WTC11 (cell line): ENCODE measurements at regions of chr12 and their contacts with region 1.

Region 1: GRCh38 chr12:108193917-108194316 is 64.8 kb downstream of the WSCD2 start:
- DNase-seq: peak; percentile 28
- ATAC-seq: no peak
- H3K4me3 Mint-ChIP-seq: no peak overlapping the region
- H3K27ac Mint-ChIP-seq: no peak overlapping the region
- H3K4me1 Mint-ChIP-seq: peaks cover 8% of the 10 kb centered on the region
- H3K27me3 Mint-ChIP-seq: no peaks in the 10 kb centered on the region
- CTCF ChIP-seq: peak; percentile 63

Region 2: GRCh38 chr12:107801150-107801549 is 392.8 kb before region 1 on chr12:
- CTCF ChIA-PET with region 1: no interaction called
- POLR2A ChIA-PET with region 1: no interaction called
- DNase-seq: no peak
- ATAC-seq: no peak
- H3K4me3 Mint-ChIP-seq: no peak overlapping the region
- H3K27ac Mint-ChIP-seq: no peak overlapping the region
- H3K4me1 Mint-ChIP-seq: peaks cover 15% of the 10 kb centered on the region
- H3K27me3 Mint-ChIP-seq: peaks cover 9% of the 10 kb centered on the region
- CTCF ChIP-seq: no peak

Region 3: GRCh38 chr12:108063192-108063591 is 130.7 kb before region 1 on chr12:
- CTCF ChIA-PET with region 1: interaction called, 15 read pairs
- POLR2A ChIA-PET with region 1: no interaction called
- DNase-seq: no peak
- ATAC-seq: peak; percentile 53
- H3K4me3 Mint-ChIP-seq: no peak overlapping the region
- H3K27ac Mint-ChIP-seq: no peak overlapping the region
- H3K4me1 Mint-ChIP-seq: no peaks in the 10 kb centered on the region
- H3K27me3 Mint-ChIP-seq: no peaks in the 10 kb centered on the region
- CTCF ChIP-seq: peak; percentile 84

Region 4: GRCh38 chr12:108129017-108129812 is 64.7 kb before region 1 on chr12 and contains the start of gene WSCD2:
- CTCF ChIA-PET with region 1: interaction called, 17 read pairs
- POLR2A ChIA-PET with region 1: no interaction called
- DNase-seq: peak; percentile 90
- ATAC-seq: peak; percentile 90
- H3K4me3 Mint-ChIP-seq: peak within 1 kb of the TSS; percentile 69
- H3K27ac Mint-ChIP-seq: no peak within 1 kb of the TSS
- H3K4me1 Mint-ChIP-seq: peaks cover 25% of the 10 kb centered on the region
- H3K27me3 Mint-ChIP-seq: peaks cover 28% of the 10 kb centered on the region
- CTCF ChIP-seq: no peak
- total RNA-seq, gene WSCD2: 1.1 to 1.6 TPM (median 1.6 TPM) in 3 replicates

Region 5: GRCh38 chr12:108173160-108173559 is 20.8 kb before region 1 on chr12:
- CTCF ChIA-PET with region 1: interaction called, 10 read pairs
- POLR2A ChIA-PET with region 1: no interaction called
- DNase-seq: peak; percentile 21
- ATAC-seq: peak; percentile 75
- H3K4me3 Mint-ChIP-seq: no peak overlapping the region
- H3K27ac Mint-ChIP-seq: peak overlapping the region; percentile 82; the same call in 1 of the 2 replicates
- H3K4me1 Mint-ChIP-seq: peaks cover 47% of the 10 kb centered on the region
- H3K27me3 Mint-ChIP-seq: no peaks in the 10 kb centered on the region; the same call in none of the 2 replicates
- CTCF ChIP-seq: no peak

Region 6: GRCh38 chr12:108442067-108442466 is 248.2 kb after region 1 on chr12:
- CTCF ChIA-PET with region 1: no interaction called
- POLR2A ChIA-PET with region 1: no interaction called
- DNase-seq: peak; percentile 38
- ATAC-seq: peak; percentile 93
- H3K4me3 Mint-ChIP-seq: peak overlapping the region; percentile 36
- H3K27ac Mint-ChIP-seq: peak overlapping the region; percentile 99
- H3K4me1 Mint-ChIP-seq: peaks cover 66% of the 10 kb centered on the region
- H3K27me3 Mint-ChIP-seq: no peaks in the 10 kb centered on the region
- CTCF ChIP-seq: no peak

Region 7: GRCh38 chr12:108457006-108457733 is 263.3 kb after region 1 on chr12:
- CTCF ChIA-PET with region 1: interaction called, 11 read pairs
- POLR2A ChIA-PET with region 1: no interaction called
- DNase-seq: no peak
- ATAC-seq: peak; percentile 95
- H3K4me3 Mint-ChIP-seq: no peak overlapping the region
- H3K27ac Mint-ChIP-seq: peak overlapping the region; percentile 3
- H3K4me1 Mint-ChIP-seq: peaks cover 24% of the 10 kb centered on the region
- H3K27me3 Mint-ChIP-seq: no peaks in the 10 kb centered on the region
- CTCF ChIP-seq: peak; percentile 50; the same call in 1 of the 2 replicates